ENCODE measurements at regions of chr6 and their contacts with region 1.

Region 1: GRCh38 chr6:43608310-43608763 is 20.7 kb downstream of the GTPBP2 start:
- DNase-seq: no peak
- H3K4me3 ChIP-seq: no peak overlapping the region
- CTCF ChIP-seq: peak; percentile 72

Region 2: GRCh38 chr6:42947950-42948349 is 660.4 kb before region 1 on chr6:
- CTCF ChIA-PET with region 1: no interaction called
- POLR2A ChIA-PET with region 1: no interaction called
- DNase-seq: no peak
- H3K4me3 ChIP-seq: no peak overlapping the region
- CTCF ChIP-seq: no peak

Region 3: DNA sequence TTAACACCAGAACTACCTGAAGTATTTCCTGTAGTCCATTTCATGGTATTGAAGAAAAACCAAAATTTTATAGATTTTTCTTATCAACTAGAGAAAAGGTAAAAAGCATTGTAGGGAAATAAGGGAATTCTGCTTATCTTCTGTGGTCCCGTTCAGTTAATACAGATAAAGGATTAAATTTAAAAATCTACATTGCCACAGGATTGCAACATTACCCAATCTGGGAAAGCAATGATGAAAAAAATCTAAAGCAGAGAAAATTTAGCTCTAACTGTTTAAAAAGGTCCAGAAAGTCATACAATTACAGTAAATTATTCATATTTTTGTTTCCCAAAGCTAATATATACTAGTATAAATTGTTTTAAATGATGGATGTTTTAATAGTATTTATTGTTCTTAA is 14.4 kb before region 1 on chr6:
- CTCF ChIA-PET with region 1: interaction called, 93 read pairs
- POLR2A ChIA-PET with region 1: no interaction called
- DNase-seq: no peak
- H3K4me3 ChIP-seq: no peak overlapping the region
- CTCF ChIP-seq: no peak

Region 4: GRCh38 chr6:43621429-43622180 is 13.3 kb after region 1 on chr6:
- CTCF ChIA-PET with region 1: interaction called, 44 read pairs
- POLR2A ChIA-PET with region 1: interaction called, 3 read pairs
- DNase-seq: no peak
- H3K4me3 ChIP-seq: no peak overlapping the region
- CTCF ChIP-seq: no peak

Region 5: GRCh38 chr6:43629505-43630300 is 21.4 kb after region 1 on chr6:
- CTCF ChIA-PET with region 1: interaction called, 21 read pairs
- POLR2A ChIA-PET with region 1: interaction called, 5 read pairs
- DNase-seq: peak; percentile 89
- H3K4me3 ChIP-seq: peak overlapping the region; percentile 91
- CTCF ChIP-seq: no peak

Region 6: GRCh38 chr6:44086931-44087574 is 478.7 kb after region 1 on chr6:
- CTCF ChIA-PET with region 1: interaction called, 11 read pairs
- POLR2A ChIA-PET with region 1: no interaction called
- DNase-seq: no peak
- H3K4me3 ChIP-seq: no peak overlapping the region
- CTCF ChIP-seq: no peak

Measured in AG04449 (cell line).